Uterus (tissue), 4 donors: ENCODE measurements at regions of chr10 and their contacts with region 1.

Region 1: DNA sequence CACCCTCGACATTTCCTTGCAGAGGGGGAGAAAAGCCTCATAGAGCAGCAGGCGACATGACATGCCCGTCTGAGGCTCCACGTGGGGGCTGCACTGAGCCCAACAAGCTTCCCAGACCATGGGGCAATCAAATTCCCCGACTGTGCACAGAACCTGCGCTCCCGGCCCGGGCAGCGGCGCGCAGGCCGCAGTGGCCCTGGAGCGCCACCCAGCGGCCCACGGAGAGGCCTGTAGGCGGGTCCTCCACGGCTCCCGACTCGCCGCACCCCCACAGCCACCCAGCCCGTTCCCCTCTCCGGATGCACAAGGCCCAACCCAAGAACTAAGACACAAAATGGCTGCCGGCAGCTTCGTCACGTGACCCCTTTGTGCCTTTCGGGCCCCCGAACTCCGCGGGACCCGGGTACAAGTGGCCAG is 816 bp downstream of the EPC1 start:
- DNase-seq: peak; percentile 96
- H3K4me3 ChIP-seq: peak overlapping the region; percentile 91 to 94
- H3K27ac ChIP-seq: peak overlapping the region; percentile 99 to 100
- H3K4me1 ChIP-seq: peaks cover 4 to 7% of the 10 kb centered on the region in 2 donors
- H3K27me3 ChIP-seq: no peaks in the 10 kb centered on the region
- CTCF ChIP-seq: peak; percentile 96 to 99 (median 97)
- POLR2A ChIP-seq: peak; percentile 44 to 49

Region 2: DNA sequence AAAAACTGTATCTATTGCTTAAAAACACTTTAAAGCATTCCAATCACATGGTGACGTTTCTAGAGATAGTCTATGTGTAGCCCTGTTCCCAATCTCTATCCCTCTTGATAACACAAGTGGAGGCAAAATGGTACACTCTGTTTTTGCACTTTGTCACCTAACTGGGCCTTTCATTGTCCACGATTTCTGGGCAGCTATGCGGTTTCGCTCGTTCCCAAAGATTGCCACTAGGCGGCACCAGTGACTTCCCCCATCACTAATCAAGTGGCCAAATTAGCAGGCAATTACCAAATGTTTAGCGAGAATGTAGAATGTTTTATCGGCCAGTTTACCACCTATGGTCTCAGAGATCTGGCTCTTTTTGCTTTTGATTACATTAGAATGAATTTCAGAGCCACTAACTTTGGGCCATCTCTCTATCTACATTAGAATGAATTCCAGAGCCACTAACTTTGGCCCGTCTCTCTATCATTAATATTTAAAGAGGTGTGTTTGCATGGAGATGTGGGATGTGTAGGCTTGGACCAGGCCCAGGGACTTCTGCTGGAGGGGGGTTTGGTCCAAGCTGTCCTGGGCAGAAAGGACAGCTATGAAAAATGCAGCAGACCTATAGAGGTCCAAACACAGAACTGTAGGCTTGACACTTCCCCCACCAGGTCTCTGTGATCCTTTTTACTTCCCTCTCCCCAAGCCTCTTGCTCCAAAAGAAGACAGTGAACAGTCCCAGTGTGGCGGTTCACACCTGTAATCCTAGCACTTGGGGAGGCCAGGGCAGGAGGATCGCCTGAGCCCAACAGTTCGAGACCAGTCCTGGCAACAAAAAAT is 89.3 kb before region 1 on chr10:
- intact Hi-C with region 1: loop called (anchors 10 kb)
- DNase-seq: peak; percentile 63 to 69
- H3K4me3 ChIP-seq: no peak overlapping the region
- H3K27ac ChIP-seq: no peak overlapping the region
- H3K4me1 ChIP-seq: no peaks in the 10 kb centered on the region
- H3K27me3 ChIP-seq: no peaks in the 10 kb centered on the region
- CTCF ChIP-seq: peak; percentile 83 to 86 (median 84)
- POLR2A ChIP-seq: no peak